Endothelial cell of umbilical vein (primary cell): ENCODE measurements at regions of chrX and their contacts with region 1.

Region 1: DNA sequence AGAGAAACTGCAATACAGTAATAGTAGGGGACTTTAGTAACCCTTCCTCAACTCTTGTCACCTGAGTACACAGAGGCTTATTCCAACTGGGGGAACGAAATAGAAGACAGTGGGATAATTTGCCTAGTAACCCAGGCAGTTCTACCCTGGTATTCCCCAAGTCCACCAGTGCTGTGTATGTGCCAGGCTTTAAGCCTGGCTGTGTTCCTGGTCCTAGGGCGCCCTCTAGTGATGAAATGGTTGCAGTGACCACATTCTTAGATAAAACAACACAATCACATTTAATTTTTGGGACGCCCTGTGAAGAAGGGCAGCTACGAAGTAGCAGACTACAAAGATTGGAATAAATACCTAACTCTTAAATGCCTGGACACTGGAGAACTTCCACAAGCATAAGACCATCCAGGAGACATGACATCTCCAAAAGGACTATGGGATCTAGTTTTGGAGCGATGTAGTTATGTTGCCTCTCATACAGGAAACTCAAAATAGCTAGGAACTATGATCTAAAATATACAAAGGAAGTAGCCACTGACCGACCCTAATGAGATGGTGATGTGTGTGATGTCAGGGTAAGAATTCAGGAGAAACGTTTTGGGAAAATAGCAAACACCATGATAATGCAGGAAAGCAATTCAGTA is 288.5 kb upstream of the ZCCHC13 start:
- DNase-seq: peak; percentile 70
- H3K4me3 ChIP-seq: no peak overlapping the region
- H3K27ac ChIP-seq: no peak overlapping the region
- H3K4me1 ChIP-seq: no peaks in the 10 kb centered on the region
- H3K27me3 ChIP-seq: no peaks in the 10 kb centered on the region
- CTCF ChIP-seq: peak; percentile 54
- POLR2A ChIP-seq: no peak

Region 2: DNA sequence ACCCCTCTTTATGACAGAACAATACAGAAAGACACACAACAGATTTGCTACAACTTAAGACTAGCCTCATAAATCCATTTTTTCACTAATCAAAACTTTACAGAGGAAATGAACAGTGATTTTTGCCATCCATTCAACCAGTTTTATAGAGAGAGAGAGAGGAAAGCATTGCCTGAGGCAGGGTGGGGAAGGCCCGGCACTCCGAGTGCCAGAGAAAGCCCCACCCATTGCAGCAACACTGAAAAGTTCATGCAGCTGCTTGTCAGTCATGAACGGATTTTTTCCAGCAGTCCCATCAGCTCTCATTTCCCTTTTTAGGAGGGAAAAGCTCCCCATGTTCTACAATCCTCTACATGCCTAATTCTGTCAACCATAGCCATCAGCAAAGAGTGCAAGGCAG is 215.6 kb before region 1 on chrX:
- CTCF ChIA-PET with region 1: no interaction called
- POLR2A ChIA-PET with region 1: no interaction called
- dilution Hi-C with region 1: no loop called
- intact Hi-C with region 1: no loop called
- DNase-seq: no peak
- H3K4me3 ChIP-seq: no peak overlapping the region
- H3K27ac ChIP-seq: no peak overlapping the region
- H3K4me1 ChIP-seq: no peaks in the 10 kb centered on the region
- H3K27me3 ChIP-seq: no peaks in the 10 kb centered on the region
- CTCF ChIP-seq: no peak
- POLR2A ChIP-seq: no peak

Region 3: DNA sequence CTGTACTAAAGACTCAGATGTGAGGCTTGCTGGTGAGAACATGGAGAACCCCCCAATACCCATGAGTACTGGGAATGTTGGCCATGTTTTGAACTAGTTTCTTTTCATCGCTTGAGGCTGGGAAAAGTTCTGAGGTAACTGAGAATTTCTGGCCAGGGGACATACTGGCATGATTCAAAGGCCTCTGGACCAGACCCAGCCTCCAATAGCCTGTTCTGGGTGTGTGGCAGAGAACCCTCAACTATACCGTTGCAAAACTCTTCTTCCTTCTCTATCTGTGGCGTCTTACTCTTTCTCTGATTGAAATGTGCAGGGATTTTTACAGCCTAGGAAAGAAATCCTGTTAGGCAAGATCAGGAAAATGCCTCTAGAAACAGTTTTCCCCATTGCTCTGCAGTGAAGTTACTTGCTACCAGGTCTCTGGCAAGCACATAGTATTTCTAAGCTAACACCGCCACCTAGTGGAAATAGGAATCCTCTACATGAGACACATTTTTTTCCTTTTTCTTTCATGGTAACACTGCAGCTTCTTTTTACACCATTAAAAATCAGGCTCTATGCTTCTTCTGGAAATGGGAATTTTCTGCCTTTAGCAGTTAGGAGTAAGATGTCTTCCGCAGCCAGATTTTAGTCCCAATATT is 117.8 kb after region 1 on chrX:
- CTCF ChIA-PET with region 1: interaction called, 7 read pairs
- POLR2A ChIA-PET with region 1: no interaction called
- dilution Hi-C with region 1: no loop called
- intact Hi-C with region 1: loop called (anchors 1 kb)
- DNase-seq: peak; percentile 39
- H3K4me3 ChIP-seq: no peak overlapping the region
- H3K27ac ChIP-seq: no peak overlapping the region
- H3K4me1 ChIP-seq: no peaks in the 10 kb centered on the region
- H3K27me3 ChIP-seq: no peaks in the 10 kb centered on the region
- CTCF ChIP-seq: peak; percentile 23 to 34
- POLR2A ChIP-seq: no peak